ENCODE measurements at regions of chr14 and their contacts with region 1.

Region 1: GRCh38 chr14:35385042-35385839 is 19.3 kb downstream of the NFKBIA start:
- DNase-seq: peak; percentile 93
- ATAC-seq: peak; percentile 88
- H3K4me3 ChIP-seq: no peak overlapping the region
- H3K27ac ChIP-seq: peak overlapping the region; percentile 89
- H3K4me1 ChIP-seq: peaks cover 21% of the 10 kb centered on the region
- H3K27me3 ChIP-seq: no peaks in the 10 kb centered on the region
- CTCF ChIP-seq: no peak
- POLR2A ChIP-seq: peak; percentile 46
- RAD21 ChIP-seq: no peak

Region 2: DNA sequence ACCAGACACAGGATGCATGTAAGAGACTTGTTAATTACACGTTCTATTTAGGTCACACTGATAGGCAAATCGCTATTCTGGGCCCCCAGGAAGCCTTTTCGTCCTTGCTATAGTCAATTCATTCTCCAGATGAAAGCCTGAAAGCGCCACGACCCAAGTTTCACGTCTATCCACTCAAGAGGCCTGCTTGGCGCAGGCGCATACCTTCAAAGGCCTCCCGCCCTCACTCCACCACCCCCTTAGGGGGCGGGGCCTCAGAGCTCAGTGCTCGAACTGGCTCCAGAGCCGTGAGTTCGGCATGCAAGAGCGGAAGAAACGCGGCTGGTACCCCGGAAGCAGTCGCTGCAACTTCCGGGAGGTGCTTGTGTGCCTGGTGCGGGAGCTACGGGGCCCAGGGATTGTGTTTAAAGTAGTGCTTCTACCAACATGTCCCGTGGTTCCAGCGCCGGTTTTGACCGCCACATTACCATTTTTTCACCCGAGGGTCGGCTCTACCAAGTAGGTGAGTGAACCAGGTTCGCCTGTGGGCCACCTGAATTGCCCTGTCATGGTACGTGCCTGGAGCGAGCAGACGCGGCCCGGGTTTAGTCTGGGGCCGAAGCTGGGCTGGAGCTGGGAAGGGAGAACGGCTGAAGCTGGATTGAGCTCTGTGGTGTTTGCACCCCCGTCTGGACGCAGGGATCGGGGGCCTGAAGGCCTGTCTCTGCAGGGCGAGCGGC is 93.0 kb before region 1 on chr14 and contains the start of gene PSMA6:
- CTCF ChIA-PET with region 1: no interaction called
- POLR2A ChIA-PET with region 1: no interaction called
- dilution Hi-C with region 1: no loop called
- in situ Hi-C with region 1: no loop called
- intact Hi-C with region 1: loop called (anchors 2 kb)
- DNase-seq: peak; percentile 99
- ATAC-seq: peak; percentile 98
- H3K4me3 ChIP-seq: peak within 1 kb of the TSS; percentile 74
- H3K27ac ChIP-seq: peak within 1 kb of the TSS; percentile 90
- H3K4me1 ChIP-seq: peaks cover 2% of the 10 kb centered on the region
- H3K27me3 ChIP-seq: no peaks in the 10 kb centered on the region
- CTCF ChIP-seq: no peak
- POLR2A ChIP-seq: peak; percentile 85
- RAD21 ChIP-seq: peak; percentile 17; the same call in 1 of the 2 replicates
- total RNA-seq, gene PSMA6: 435 and 530 TPM in 2 replicates